ENCODE measurements at regions of chr19 and their contacts with region 1.

Region 1: GRCh38 chr19:2944775-2945574 is at the start of gene ZNF77:
- DNase-seq: peak; percentile 99 to 100 (median 100)
- H3K4me3 ChIP-seq: peak within 1 kb of the TSS; percentile 59 to 98 (median 86)
- H3K27ac ChIP-seq: peak within 1 kb of the TSS; percentile 57 to 96 (median 91)
- H3K4me1 ChIP-seq: peaks cover 15 to 20% of the 10 kb centered on the region in 2 donors
- H3K27me3 ChIP-seq: no peaks in the 10 kb centered on the region
- CTCF ChIP-seq: peak in 4 of 6 experiments; percentile 23 to 35 (median 32)
- POLR2A ChIP-seq: peak in 1 of 2 donors; percentile 43
- total RNA-seq, gene ZNF77: 1.1 to 10.6 (median 3.9) TPM

Region 2: GRCh38 chr19:2887391-2887914 is 57.5 kb before region 1 on chr19:
- intact Hi-C with region 1: loop called (anchors 10 kb)
- DNase-seq: peak in 2 of 7 donors; percentile 17 to 33
- H3K4me3 ChIP-seq: no peak overlapping the region
- H3K27ac ChIP-seq: peak overlapping the region in 1 of 5 donors; percentile 37
- H3K4me1 ChIP-seq: no peaks in the 10 kb centered on the region
- H3K27me3 ChIP-seq: no peaks in the 10 kb centered on the region
- CTCF ChIP-seq: peak; percentile 43 to 69 (median 63)
- POLR2A ChIP-seq: no peak

Measured in adrenal gland (tissue), 19 donors.